ENCODE measurements at regions of chr13 and their contacts with region 1.

Region 1: GRCh38 chr13:47774671-47774994 is 226.4 kb downstream of the SUCLA2 start:
- DNase-seq: no peak
- H3K4me3 ChIP-seq: no peak overlapping the region
- H3K27ac ChIP-seq: no peak overlapping the region
- H3K4me1 ChIP-seq: 0 out of 2 replicates have a peak, but pooled peaks cover 5% of the 10 kb centered on the region
- H3K27me3 ChIP-seq: 0 out of 2 replicates have a peak, but pooled peaks cover 3% of the 10 kb centered on the region

Region 2: GRCh38 chr13:46831588-46832194 is 942.9 kb before region 1 on chr13:
- in situ Hi-C with region 1: loop called (anchors 10 kb)
- DNase-seq: peak; percentile 57
- H3K4me3 ChIP-seq: no peak overlapping the region
- H3K27ac ChIP-seq: no peak overlapping the region
- H3K4me1 ChIP-seq: no peaks in the 10 kb centered on the region
- H3K27me3 ChIP-seq: no peaks in the 10 kb centered on the region

Region 3: GRCh38 chr13:47929156-47929555 is 154.5 kb after region 1 on chr13:
- in situ Hi-C with region 1: no loop called
- DNase-seq: peak; percentile 67
- H3K4me3 ChIP-seq: no peak overlapping the region
- H3K27ac ChIP-seq: no peak overlapping the region; the same call in 1 of the 2 replicates
- H3K4me1 ChIP-seq: peaks cover 7% of the 10 kb centered on the region; the same call in 1 of the 2 replicates
- H3K27me3 ChIP-seq: no peaks in the 10 kb centered on the region

Region 4: GRCh38 chr13:48066310-48066989 is 291.8 kb after region 1 on chr13:
- in situ Hi-C with region 1: no loop called
- DNase-seq: peak; percentile 10
- H3K4me3 ChIP-seq: no peak overlapping the region
- H3K27ac ChIP-seq: no peak overlapping the region
- H3K4me1 ChIP-seq: no peaks in the 10 kb centered on the region
- H3K27me3 ChIP-seq: no peaks in the 10 kb centered on the region